Adrenal gland (tissue), 19 donors: ENCODE measurements at regions of chr2 and their contacts with region 1.

Region 1: DNA sequence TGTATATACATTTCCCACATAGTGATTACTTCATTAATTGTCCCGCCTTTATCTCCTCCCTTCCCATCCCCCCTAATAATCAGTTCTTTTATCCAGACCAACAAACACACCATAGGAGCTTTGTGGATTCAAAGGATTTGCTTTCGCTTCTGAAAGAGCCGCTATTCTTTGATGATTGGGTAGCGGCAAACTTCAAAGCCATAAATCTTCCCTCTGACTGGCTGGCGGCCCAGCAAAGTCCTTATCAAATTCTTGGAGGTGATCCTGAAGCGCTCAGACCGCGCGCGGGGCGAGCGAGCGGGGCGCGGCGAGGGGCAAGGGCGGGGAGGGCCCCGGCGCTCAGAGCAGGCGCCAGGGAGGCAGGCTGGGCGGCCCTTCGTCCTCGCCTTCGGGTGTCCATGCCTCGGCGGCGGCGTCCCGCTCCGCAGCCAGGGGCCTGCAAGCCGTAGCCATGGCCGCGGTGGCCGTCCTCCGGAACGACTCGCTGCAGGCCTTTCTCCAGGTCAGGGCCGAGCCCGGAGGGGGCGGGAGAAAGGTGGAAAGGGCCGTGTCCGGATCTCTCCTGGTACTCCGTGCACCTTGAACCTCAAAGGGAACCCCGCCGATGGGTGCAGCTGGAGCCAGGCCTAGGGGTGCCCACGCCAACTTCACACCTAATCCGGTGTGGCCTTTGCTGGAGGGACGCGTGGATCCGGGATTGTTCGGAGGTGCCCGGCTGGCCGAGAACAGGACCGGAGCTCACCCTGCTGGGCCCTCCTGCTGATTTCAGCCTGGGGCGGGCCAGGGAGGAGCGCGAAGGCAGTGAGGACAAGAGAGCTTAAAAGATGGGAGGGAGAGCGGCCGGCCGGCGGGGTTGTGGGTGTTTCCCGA is at the start of gene SP5:
- DNase-seq: peak; percentile 84 to 93 (median 89)
- H3K4me3 ChIP-seq: peak within 1 kb of the TSS in 3 of 4 donors; percentile 36 to 61 (median 43)
- H3K27ac ChIP-seq: peak within 1 kb of the TSS in 4 of 5 donors; percentile 30 to 87 (median 62)
- H3K4me1 ChIP-seq: peaks cover 10 to 25% of the 10 kb centered on the region in 2 donors
- H3K27me3 ChIP-seq: peaks cover 32% of the 10 kb centered on the region
- CTCF ChIP-seq: no peak
- POLR2A ChIP-seq: peak in 1 of 2 donors; percentile 66
- total RNA-seq, gene SP5: 0.87 to 9.2 (median 3.9) TPM

Region 2: DNA sequence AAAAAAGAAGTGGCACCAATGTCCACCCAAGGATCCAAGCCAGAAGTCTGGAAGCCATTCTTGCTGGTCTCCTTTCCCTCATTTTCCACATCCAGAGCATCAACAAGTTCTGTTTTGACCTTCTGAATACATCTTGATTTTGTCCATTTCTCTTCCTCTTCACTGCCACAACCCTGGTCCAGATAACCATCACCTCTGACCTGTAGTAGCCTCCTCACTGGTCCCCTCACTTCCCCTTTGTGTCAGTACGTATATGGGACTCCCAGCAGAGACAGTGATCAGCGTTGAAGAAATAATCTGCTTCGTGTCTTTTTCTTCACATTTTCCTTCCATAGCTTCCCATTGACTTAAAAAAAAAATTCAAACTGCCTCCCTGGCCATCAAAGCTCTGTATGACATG is 109.4 kb before region 1 on chr2:
- intact Hi-C with region 1: no loop called
- DNase-seq: no peak
- H3K4me3 ChIP-seq: no peak overlapping the region
- H3K27ac ChIP-seq: no peak overlapping the region
- H3K4me1 ChIP-seq: no peaks in the 10 kb centered on the region
- H3K27me3 ChIP-seq: no peaks in the 10 kb centered on the region
- CTCF ChIP-seq: no peak
- POLR2A ChIP-seq: no peak

Region 3: DNA sequence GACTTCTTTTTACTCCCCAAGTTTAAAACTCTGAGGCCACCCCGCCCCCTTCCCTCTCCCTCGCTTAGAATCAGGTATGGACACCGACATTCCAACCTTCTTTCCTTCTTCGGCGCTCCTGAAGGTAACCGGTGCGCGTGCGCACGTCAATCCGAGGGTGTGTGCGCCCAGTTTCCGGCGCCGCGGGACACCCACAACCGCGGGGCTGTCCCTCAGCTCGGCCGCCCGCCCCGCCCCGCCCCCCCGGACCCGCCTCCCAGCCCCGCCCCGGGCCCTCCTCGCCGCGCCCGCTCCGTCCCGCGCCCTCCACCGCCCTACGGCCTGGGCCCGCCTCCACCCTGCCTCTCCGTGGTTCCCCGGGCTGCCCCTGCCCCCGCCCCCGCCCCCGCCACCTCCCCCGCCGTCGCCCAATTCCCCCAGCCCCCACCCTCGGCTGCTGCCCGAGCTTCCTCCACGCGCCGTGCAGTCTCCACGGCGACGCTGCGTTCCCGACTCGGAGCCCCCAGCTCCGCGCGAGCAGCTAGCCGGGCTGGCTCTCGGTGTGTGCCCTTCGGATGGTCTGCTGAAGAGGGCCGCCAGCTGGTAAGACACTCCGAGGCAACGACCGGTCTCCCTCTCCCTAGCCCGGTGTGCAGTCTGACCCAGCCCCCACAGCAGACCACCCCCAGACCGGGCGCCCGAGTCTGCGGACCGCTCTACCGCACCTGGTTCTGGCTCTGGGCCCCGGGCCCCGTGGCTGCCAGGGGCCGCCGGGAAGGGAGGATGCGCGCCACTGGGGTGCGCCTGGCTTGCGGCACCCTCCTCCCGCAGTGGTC is 55.5 kb after region 1 on chr2:
- intact Hi-C with region 1: loop called in 1 of 2 experiments (anchors 10 kb)
- DNase-seq: peak; percentile 79 to 88 (median 81)
- H3K4me3 ChIP-seq: peak overlapping the region in 3 of 4 donors; percentile 28 to 84 (median 55)
- H3K27ac ChIP-seq: peak overlapping the region in 3 of 5 donors; percentile 21 to 60 (median 50)
- H3K4me1 ChIP-seq: peaks cover 0 to 6% of the 10 kb centered on the region in 2 donors
- H3K27me3 ChIP-seq: no peaks in the 10 kb centered on the region
- CTCF ChIP-seq: no peak
- POLR2A ChIP-seq: peak in 1 of 2 donors; percentile 43